PC-9 (cell line): ENCODE measurements at regions of chr12 and their contacts with region 1.

Region 1: GRCh38 chr12:100229058-100229637 is 28.5 kb downstream of the ACTR6 start:
- DNase-seq: peak; percentile 28 to 73
- H3K4me3 ChIP-seq: peak overlapping the region; percentile 45; the same call in 1 of the 2 replicates
- H3K27ac ChIP-seq: peak overlapping the region; percentile 93
- H3K4me1 ChIP-seq: peaks cover 68% of the 10 kb centered on the region
- H3K27me3 ChIP-seq: no peaks in the 10 kb centered on the region
- CTCF ChIP-seq: peak; percentile 46; the same call in 1 of the 2 replicates

Region 2: DNA sequence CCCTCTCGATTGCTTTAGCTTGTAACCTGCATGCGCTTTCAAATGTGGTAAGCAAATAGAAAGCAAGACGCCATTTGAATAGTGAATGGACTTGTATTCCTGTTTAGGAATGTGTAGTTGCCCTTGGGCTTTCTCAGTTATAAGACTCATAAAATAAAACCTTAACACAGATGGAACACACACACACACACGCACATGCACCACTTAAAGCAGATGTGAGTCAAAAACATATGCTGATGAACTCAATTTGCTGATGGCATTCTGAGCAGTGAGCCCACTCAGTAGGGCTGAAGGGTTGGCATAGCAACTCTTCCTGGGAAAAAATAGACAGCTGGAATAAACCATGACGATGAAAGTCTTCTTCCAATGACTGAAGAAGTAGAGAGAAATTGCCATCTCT is 1223.5 kb before region 1 on chr12:
- CTCF ChIA-PET with region 1: no interaction called
- POLR2A ChIA-PET with region 1: no interaction called
- intact Hi-C with region 1: no loop called
- DNase-seq: no peak
- H3K4me3 ChIP-seq: no peak overlapping the region
- H3K27ac ChIP-seq: no peak overlapping the region
- H3K4me1 ChIP-seq: no peaks in the 10 kb centered on the region
- H3K27me3 ChIP-seq: peaks cover 26% of the 10 kb centered on the region
- CTCF ChIP-seq: no peak

Region 3: DNA sequence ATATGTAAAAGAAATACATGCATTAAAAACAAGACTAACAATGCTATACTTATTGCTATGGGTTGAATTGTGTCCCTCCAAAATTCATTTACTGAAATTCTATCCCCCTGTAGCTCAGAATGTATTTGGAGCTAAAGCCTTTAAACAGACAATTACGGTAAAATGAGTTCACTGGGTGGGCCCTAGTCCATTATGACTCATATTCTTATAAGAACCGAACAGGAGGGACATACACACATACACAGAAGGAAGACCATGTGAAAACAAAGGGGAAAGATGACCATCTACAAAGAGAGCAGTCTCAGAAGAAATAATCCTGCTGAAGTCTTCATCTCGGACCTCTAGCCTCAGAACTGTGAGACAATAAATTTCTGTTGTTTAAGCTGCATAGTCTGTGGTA is 167.3 kb before region 1 on chr12:
- CTCF ChIA-PET with region 1: no interaction called
- POLR2A ChIA-PET with region 1: no interaction called
- intact Hi-C with region 1: loop called (anchors 1 kb)
- DNase-seq: no peak
- H3K4me3 ChIP-seq: no peak overlapping the region
- H3K27ac ChIP-seq: no peak overlapping the region
- H3K4me1 ChIP-seq: no peaks in the 10 kb centered on the region
- H3K27me3 ChIP-seq: no peaks in the 10 kb centered on the region
- CTCF ChIP-seq: no peak

Region 4: DNA sequence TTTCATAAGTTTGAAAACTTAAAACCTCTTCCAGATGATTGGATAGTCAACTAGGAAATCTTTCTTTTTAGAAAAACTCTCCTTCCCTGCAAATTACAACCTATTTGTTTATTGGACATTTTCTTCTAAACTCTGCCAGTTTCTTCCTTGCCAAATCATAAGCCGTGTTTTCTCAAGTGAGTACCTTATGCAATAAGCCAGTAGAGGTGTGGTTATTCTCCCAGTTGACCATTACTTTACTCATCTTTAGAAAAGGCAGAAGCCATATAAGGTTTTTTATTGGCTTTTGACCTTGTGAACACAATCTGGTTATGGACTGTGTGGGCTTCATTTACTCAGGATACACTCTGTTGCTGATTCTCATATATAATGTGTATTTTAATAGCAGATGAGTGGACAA is 13.9 kb before region 1 on chr12:
- CTCF ChIA-PET with region 1: interaction called, 3 read pairs
- POLR2A ChIA-PET with region 1: interaction called, 15 read pairs
- intact Hi-C with region 1: no loop called
- DNase-seq: no peak
- H3K4me3 ChIP-seq: no peak overlapping the region
- H3K27ac ChIP-seq: no peak overlapping the region
- H3K4me1 ChIP-seq: no peaks in the 10 kb centered on the region
- H3K27me3 ChIP-seq: no peaks in the 10 kb centered on the region
- CTCF ChIP-seq: no peak

Region 5: DNA sequence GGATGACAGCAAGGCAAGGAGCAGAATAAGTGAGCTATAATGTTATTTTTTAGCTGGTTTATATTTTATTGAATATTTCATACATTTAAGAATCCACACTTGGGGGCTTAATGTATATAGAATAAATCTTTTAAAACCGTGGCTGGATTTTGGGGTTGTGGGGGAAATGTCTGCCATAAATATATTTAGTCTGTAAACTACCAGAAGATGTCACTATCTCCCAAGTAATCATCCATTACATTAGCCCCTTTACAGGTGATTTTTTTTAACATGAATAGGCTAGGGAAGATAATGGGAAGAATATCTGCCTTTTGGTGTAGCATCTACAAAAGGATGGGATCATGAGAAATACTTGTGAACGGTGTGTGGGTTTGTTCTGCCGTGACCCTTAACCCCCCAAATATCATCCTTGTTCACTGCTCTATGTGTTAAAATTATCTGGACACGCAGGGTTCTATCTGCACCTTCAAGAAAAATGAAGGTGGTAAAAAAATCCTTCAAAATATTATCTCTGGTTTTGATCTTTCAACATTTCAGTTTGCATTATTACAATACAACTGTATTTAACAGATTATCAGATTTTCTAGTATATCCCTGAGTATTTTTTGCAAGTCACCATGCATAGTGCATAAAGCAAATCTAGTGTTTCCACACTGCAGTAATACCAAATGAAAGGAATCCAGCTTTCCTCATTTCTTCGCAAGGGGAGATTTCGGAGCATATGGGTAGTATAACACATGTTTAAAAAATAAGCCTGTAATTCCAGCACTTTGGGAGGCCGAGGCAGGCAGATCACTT is 119.7 kb after region 1 on chr12:
- CTCF ChIA-PET with region 1: no interaction called
- POLR2A ChIA-PET with region 1: interaction called, 17 read pairs
- intact Hi-C with region 1: loop called (anchors 10 kb)
- DNase-seq: no peak
- H3K4me3 ChIP-seq: no peak overlapping the region
- H3K27ac ChIP-seq: no peak overlapping the region
- H3K4me1 ChIP-seq: no peaks in the 10 kb centered on the region
- H3K27me3 ChIP-seq: peaks cover 9% of the 10 kb centered on the region
- CTCF ChIP-seq: peak; percentile 65